ENCODE measurements at regions of chr14 and their contacts with region 1.

Region 1: GRCh38 chr14:68248481-68249255 is 429.1 kb downstream of the RAD51B start:
- DNase-seq: peak; percentile 85
- H3K4me3 ChIP-seq: peak overlapping the region; percentile 2
- H3K27ac ChIP-seq: peak overlapping the region; percentile 66
- H3K4me1 ChIP-seq: peaks cover 60% of the 10 kb centered on the region
- CTCF ChIP-seq: peak; percentile 92

Region 2: GRCh38 chr14:67928375-67928774 is 320.3 kb before region 1 on chr14:
- CTCF ChIA-PET with region 1: no interaction called
- POLR2A ChIA-PET with region 1: no interaction called
- intact Hi-C with region 1: no loop called
- DNase-seq: no peak
- H3K4me3 ChIP-seq: no peak overlapping the region
- H3K27ac ChIP-seq: no peak overlapping the region
- H3K4me1 ChIP-seq: no peaks in the 10 kb centered on the region
- CTCF ChIP-seq: no peak

Region 3: GRCh38 chr14:68268197-68268596 is 19.5 kb after region 1 on chr14:
- CTCF ChIA-PET with region 1: interaction called, 5 read pairs
- POLR2A ChIA-PET with region 1: interaction called, 22 read pairs
- intact Hi-C with region 1: loop called (anchors 1 kb)
- DNase-seq: peak; percentile 93
- H3K4me3 ChIP-seq: peak overlapping the region; percentile 42
- H3K27ac ChIP-seq: peak overlapping the region; percentile 93
- H3K4me1 ChIP-seq: peaks cover 91% of the 10 kb centered on the region
- CTCF ChIP-seq: no peak

Region 4: GRCh38 chr14:68359837-68360552 is 111.3 kb after region 1 on chr14:
- CTCF ChIA-PET with region 1: no interaction called
- POLR2A ChIA-PET with region 1: interaction called, 4 read pairs
- intact Hi-C with region 1: loop called (anchors 1 kb)
- DNase-seq: no peak
- H3K4me3 ChIP-seq: no peak overlapping the region
- H3K27ac ChIP-seq: no peak overlapping the region
- H3K4me1 ChIP-seq: peaks cover 44% of the 10 kb centered on the region
- CTCF ChIP-seq: no peak

Region 5: GRCh38 chr14:68506021-68506644 is 257.5 kb after region 1 on chr14:
- CTCF ChIA-PET with region 1: no interaction called
- POLR2A ChIA-PET with region 1: no interaction called
- intact Hi-C with region 1: loop called (anchors 5 kb)
- DNase-seq: peak; percentile 32
- H3K4me3 ChIP-seq: peak overlapping the region; percentile 17
- H3K27ac ChIP-seq: peak overlapping the region; percentile 86
- H3K4me1 ChIP-seq: peaks cover 55% of the 10 kb centered on the region
- CTCF ChIP-seq: no peak

Region 6: DNA sequence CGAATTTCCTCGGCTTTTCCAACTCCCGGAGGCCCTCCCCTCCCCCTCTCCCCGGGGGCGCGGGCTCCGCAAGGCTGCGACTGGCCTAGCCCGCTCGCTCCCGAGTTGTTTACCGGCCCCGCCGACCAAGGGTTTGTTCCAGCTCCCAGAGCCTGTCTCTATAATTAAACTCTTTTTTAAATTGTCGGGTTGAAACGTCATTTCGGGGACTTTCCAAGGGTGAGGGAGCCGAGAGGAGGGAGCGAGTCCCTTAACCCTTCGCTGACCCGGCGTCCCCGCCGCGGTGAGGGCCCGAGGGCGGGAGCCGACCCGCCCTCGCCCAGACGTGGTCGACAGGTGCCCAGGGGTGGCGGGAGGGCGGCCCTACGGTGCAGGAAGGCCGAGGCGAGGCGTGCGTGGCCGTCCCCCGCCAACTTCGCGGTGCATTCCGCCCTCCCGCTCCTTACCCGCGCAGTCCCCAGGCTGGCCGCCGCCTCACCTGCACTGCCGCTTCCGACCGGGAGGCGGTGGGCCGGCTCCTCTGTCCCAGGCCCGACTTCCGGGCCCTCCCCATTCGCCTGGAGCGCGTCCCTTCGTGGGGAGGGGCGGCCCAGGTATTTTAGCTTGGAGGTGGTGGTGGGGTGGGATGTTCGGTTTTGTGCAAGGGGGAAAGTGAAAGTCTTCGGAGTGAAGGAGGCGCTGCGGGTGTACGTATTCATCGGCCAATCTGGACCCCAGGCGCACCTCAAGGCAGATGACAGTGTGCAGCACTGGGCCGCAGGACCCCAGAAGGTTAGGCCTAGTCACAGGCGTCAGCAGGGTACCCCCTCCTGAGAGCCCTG is 547.1 kb after region 1 on chr14:
- CTCF ChIA-PET with region 1: interaction called, 6 read pairs
- POLR2A ChIA-PET with region 1: interaction called, 4 read pairs
- intact Hi-C with region 1: loop called (anchors 1 kb)
- DNase-seq: peak; percentile 90
- H3K4me3 ChIP-seq: peak overlapping the region; percentile 87
- H3K27ac ChIP-seq: peak overlapping the region; percentile 92
- H3K4me1 ChIP-seq: peaks cover 39% of the 10 kb centered on the region
- CTCF ChIP-seq: peak; percentile 71

Region 7: DNA sequence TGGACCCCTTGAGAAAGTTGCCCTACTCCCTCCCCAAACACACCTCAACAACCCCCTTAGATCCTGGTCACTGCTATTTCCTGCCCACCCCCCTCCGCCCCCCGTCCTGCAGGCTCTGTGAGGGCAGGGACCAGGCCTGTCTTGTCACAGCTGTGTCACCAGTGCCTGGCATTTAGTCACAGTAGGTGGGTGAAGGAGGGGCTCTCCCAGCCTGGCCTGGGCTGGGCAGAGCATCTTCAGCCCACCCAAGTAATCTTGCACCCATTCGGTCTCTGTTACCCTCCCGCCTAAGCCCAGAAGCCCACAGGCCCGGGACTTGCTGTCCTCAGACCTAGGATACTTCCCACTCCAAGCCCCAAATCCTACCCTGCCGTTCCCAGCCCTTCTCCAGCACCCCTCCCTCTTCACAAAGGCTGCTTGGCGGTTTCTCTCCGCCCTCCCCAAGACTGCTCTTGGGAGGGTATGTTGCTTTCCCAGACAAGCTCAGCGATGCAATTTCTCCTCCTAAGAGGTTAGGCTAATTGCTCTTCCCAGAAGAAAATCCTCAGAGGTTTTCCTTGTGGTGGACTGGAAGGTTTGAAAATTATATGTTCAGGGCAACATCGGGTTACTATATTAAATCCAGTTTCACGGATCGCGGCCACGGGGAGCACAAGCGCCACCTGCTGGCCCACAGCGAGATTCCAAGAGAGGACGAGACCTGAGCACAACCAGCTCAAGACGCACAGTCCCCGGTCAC is 595.0 kb after region 1 on chr14:
- CTCF ChIA-PET with region 1: no interaction called
- POLR2A ChIA-PET with region 1: interaction called, 3 read pairs
- intact Hi-C with region 1: loop called (anchors 1 kb)
- DNase-seq: peak; percentile 70
- H3K4me3 ChIP-seq: peak overlapping the region; percentile 33
- H3K27ac ChIP-seq: no peak overlapping the region
- H3K4me1 ChIP-seq: peaks cover 5% of the 10 kb centered on the region
- CTCF ChIP-seq: peak; percentile 100